HepG2 (cell line): ENCODE measurements at regions of chr4 and their contacts with region 1.

Region 1: DNA sequence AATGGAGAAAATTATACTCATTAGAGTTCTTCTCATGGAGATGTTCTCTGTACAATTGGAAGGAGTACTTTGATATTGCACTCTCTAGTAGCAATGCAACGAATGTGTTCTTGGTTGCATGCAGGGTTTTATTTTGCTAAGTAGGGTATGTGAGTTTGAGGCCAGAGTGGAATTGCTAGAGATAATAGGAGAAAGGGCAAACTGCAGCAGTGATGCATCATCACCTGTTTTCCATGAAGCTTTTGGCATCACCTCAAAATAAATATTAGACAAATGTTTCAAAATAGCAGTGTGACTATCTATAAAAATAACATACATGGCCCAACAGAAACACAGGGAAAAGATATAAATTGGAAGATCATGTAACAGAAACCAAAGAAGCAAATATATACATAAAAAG is 93.3 kb downstream of the TIGD2 start:
- DNase-seq: no peak
- ATAC-seq: no peak
- H3K4me3 ChIP-seq: no peak overlapping the region
- H3K27ac ChIP-seq: no peak overlapping the region
- H3K4me1 ChIP-seq: no peaks in the 10 kb centered on the region
- H3K27me3 ChIP-seq: no peaks in the 10 kb centered on the region; a peak in 1 of 5 replicates
- CTCF ChIP-seq: no peak
- EP300 ChIP-seq: no peak
- POLR2A ChIP-seq: no peak
- RAD21 ChIP-seq: no peak

Region 2: GRCh38 chr4:88409206-88409605 is 795.4 kb before region 1 on chr4:
- CTCF ChIA-PET with region 1: no interaction called
- POLR2A ChIA-PET with region 1: no interaction called
- in situ Hi-C with region 1: no loop called
- intact Hi-C with region 1: loop called (anchors 5 kb)
- DNase-seq: no peak
- ATAC-seq: no peak
- H3K4me3 ChIP-seq: no peak overlapping the region
- H3K27ac ChIP-seq: no peak overlapping the region
- H3K4me1 ChIP-seq: no peaks in the 10 kb centered on the region
- H3K27me3 ChIP-seq: no peaks in the 10 kb centered on the region
- CTCF ChIP-seq: 0 out of 2 replicates have a peak, but pooled peaks have one; percentile 13
- EP300 ChIP-seq: no peak
- POLR2A ChIP-seq: no peak
- RAD21 ChIP-seq: no peak

Region 3: GRCh38 chr4:89434364-89434988 is 229.9 kb after region 1 on chr4:
- CTCF ChIA-PET with region 1: no interaction called
- POLR2A ChIA-PET with region 1: no interaction called
- in situ Hi-C with region 1: no loop called
- intact Hi-C with region 1: no loop called
- DNase-seq: no peak
- ATAC-seq: peak; percentile 63; the same call in 2 of the 3 replicates
- H3K4me3 ChIP-seq: no peak overlapping the region
- H3K27ac ChIP-seq: no peak overlapping the region
- H3K4me1 ChIP-seq: no peaks in the 10 kb centered on the region
- H3K27me3 ChIP-seq: no peaks in the 10 kb centered on the region
- CTCF ChIP-seq: peak; percentile 49
- EP300 ChIP-seq: no peak
- POLR2A ChIP-seq: no peak
- RAD21 ChIP-seq: no peak